Motor neuron (in vitro differentiated cells): ENCODE measurements at regions of chr15 and their contacts with region 1.

Region 1: DNA sequence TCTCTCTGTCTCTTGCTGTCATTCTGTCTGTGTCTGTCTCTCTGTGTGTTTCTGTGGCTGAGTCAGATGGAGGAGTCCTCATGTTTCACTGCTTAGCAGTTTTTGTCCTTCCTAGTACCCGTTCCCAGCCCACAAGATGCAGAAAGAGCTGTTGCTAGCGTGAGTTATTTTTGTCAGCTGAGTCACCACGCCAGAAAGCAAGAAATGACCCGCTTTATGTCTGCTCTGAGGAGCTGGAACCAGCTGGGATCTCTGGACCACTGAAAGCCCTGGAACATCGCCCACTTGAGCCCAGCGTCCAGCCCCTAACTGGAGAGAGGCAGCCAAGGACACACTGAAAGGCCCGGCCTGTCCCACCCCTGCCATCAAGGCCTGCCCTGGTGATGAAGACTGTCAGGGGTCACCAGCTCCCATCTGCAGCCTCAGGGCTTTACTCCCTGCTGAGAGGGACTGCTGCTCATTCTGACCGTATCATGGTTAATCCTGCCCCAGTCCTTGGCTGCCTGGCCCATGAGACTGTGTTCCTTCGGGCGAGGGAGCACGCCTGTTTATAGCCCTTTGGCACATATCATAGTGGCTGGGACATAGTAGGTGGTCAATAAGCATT is 101.7 kb upstream of the TPM1 start:
- ATAC-seq: peak; percentile 90 to 97 (median 94)
- H3K4me3 ChIP-seq: no peak overlapping the region
- H3K27ac ChIP-seq: peak overlapping the region in 1 of 2 donors; percentile 65
- H3K4me1 ChIP-seq: peaks cover 6 to 9% of the 10 kb centered on the region in 2 donors

Region 2: GRCh38 chr15:62847900-62848489 is 92.9 kb before region 1 on chr15:
- in situ Hi-C with region 1: loop called in 1 of 9 experiments (anchors 25 kb)
- ATAC-seq: peak in 7 of 8 experiments; percentile 20 to 77 (median 51)
- H3K4me3 ChIP-seq: no peak overlapping the region
- H3K27ac ChIP-seq: no peak overlapping the region
- H3K4me1 ChIP-seq: peaks cover 0 to 2% of the 10 kb centered on the region in 2 donors

Region 3: GRCh38 chr15:63056794-63057193 is 115.9 kb after region 1 on chr15:
- in situ Hi-C with region 1: no loop called
- ATAC-seq: no peak
- H3K4me3 ChIP-seq: no peak overlapping the region
- H3K27ac ChIP-seq: no peak overlapping the region
- H3K4me1 ChIP-seq: peaks cover 33 to 38% of the 10 kb centered on the region in 2 donors